ENCODE measurements at regions of chr16 and their contacts with region 1.

Region 1: DNA sequence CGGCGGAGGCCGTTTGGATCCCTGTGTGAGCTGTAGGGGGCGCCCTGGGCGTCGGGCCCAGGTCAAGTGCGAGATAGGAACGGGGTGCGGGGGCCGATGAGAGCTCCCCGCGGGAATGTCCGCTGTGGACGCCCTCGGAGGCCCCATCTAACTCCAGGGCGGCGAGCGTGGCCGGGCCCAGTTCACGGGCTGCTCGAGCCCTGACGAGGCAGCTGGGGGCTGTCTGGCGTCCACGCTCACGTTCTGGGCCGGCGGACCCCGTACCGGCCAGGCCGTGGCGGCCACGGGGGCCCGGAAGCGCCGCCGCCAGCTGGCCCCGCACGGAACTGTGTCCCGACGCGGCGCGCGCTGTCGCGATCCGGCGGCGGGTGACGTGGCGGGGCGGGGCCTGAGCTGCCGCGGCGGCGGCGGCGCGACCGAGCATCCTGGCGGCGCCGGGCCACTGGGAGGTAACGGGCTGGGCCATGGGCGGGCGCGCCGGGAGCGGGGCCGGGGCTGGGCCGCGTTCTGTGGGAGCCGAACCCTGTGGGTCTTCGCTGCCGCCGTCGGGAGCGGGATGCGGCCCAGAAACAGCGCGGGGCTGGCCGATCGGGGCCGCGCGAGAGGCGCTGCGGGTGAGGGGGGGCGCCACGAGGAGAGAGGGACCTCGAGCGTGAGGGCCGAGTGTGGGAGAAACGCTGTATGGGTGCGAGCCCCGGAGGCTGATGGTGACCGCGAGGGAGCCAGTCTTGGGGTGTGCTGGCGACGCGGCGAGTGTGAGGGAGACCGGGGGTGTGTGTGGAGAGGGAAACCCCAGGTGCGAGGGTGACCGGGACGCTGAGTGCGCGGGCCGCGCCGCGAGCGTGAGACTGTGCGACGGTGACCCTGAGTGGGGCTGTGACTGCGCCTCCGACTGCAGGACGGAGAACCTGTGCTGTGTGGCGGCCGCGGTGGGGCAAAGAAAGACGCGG is at the start of gene SLC7A6:
- DNase-seq: peak; percentile 85 to 90
- H3K4me3 ChIP-seq: peak within 1 kb of the TSS; percentile 94
- H3K4me3 Mint-ChIP-seq: peak within 1 kb of the TSS; percentile 91
- H3K27ac Mint-ChIP-seq: peak within 1 kb of the TSS; percentile 98
- H3K4me1 ChIP-seq: peaks cover 44% of the 10 kb centered on the region
- H3K4me1 Mint-ChIP-seq: peaks cover 31% of the 10 kb centered on the region
- H3K27me3 ChIP-seq: no peaks in the 10 kb centered on the region
- H3K27me3 Mint-ChIP-seq: no peaks in the 10 kb centered on the region
- CTCF ChIP-seq: peak; percentile 77 to 79
- total RNA-seq, gene SLC7A6: 236 and 267 TPM in 2 replicates

Region 2: GRCh38 chr16:68116256-68116867 is 148.0 kb before region 1 on chr16:
- CTCF ChIA-PET with region 1: no interaction called
- POLR2A ChIA-PET with region 1: no interaction called
- intact Hi-C with region 1: no loop called
- DNase-seq: peak in 1 of 2 experiments; percentile 29
- H3K4me3 ChIP-seq: no peak overlapping the region
- H3K4me3 Mint-ChIP-seq: no peak overlapping the region
- H3K27ac Mint-ChIP-seq: no peak overlapping the region
- H3K4me1 ChIP-seq: peaks cover 9% of the 10 kb centered on the region; the same call in 1 of the 2 replicates
- H3K4me1 Mint-ChIP-seq: peaks cover 11% of the 10 kb centered on the region
- H3K27me3 ChIP-seq: no peaks in the 10 kb centered on the region
- H3K27me3 Mint-ChIP-seq: no peaks in the 10 kb centered on the region
- CTCF ChIP-seq: peak; percentile 68 to 82

Region 3: DNA sequence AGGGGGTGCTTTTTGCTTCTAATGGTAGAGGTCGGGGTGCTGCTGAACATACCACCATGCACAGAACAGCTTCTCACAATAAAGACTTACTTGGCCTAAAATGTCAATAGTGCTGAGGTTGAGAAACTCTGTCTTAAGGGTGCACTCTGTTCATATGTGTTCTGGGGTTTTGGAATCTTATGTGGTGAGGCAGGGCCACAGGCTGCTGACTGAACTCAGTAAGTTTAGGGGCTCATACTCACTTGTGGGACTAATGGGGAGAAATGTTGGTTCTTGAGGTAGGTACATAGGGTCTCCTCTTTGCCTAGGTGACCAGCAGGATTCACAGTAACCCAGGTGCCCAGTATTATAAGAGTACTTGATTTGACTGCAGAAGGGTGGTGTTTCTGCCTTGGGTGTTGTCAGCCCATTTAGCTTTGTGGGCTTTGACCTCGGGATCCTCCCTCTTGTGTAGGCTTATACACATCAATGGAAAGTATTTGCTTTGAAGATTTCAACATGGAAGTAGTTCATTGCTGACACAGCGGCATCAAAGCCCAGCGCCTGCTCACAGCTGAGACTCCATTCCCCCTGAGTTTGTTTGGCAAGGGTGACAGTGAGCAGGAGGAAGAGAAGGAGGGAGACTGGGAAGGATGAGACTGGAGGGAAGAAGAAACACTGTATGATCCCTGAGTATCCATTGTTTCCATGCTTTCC is 17.1 kb after region 1 on chr16:
- CTCF ChIA-PET with region 1: interaction called, 14 read pairs
- POLR2A ChIA-PET with region 1: interaction called, 15 read pairs
- intact Hi-C with region 1: loop called (anchors 1 kb)
- DNase-seq: peak; percentile 69 to 79
- H3K4me3 ChIP-seq: no peak overlapping the region
- H3K4me3 Mint-ChIP-seq: peak overlapping the region; percentile 29
- H3K27ac Mint-ChIP-seq: peak overlapping the region; percentile 58
- H3K4me1 ChIP-seq: peaks cover 34% of the 10 kb centered on the region
- H3K4me1 Mint-ChIP-seq: peaks cover 42% of the 10 kb centered on the region
- H3K27me3 ChIP-seq: no peaks in the 10 kb centered on the region
- H3K27me3 Mint-ChIP-seq: no peaks in the 10 kb centered on the region
- CTCF ChIP-seq: no peak

Region 4: DNA sequence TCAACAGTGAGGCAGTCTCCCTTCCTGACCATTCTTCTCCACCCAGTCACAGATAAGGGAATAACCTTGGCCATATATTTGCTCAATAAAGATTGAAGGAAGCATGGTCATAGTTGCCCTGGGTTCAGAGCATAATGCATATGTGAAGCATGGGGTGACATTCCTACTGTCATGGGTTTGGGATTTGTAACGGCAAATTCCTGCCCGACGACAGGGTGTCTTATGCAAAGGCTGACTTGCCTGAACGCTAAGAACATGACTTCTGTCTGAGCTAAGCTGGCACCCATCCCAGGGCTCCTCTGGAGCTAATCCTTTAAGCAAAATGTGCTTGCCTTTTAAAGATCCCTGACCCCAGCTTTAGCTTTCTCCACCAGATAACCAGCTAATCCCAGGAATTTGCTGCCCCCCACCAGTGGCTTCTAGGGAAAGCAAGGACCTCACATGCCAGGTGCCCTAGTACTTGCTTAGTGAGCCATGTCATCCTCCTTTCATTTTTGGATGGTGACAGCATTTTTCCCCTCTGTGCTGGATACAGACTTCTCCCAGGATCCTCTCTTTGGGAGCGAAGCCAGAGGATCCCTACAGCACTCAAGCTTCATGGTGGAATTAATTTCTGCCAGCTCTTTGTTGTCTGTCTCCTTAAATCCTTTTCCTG is 34.6 kb after region 1 on chr16:
- CTCF ChIA-PET with region 1: interaction called, 6 read pairs
- POLR2A ChIA-PET with region 1: interaction called, 11 read pairs
- intact Hi-C with region 1: loop called (anchors 5 kb)
- DNase-seq: peak in 1 of 2 experiments; percentile 42
- H3K4me3 ChIP-seq: no peak overlapping the region
- H3K4me3 Mint-ChIP-seq: peak overlapping the region; percentile 46
- H3K27ac Mint-ChIP-seq: peak overlapping the region; percentile 89
- H3K4me1 ChIP-seq: peaks cover 29% of the 10 kb centered on the region
- H3K4me1 Mint-ChIP-seq: peaks cover 55% of the 10 kb centered on the region
- H3K27me3 ChIP-seq: no peaks in the 10 kb centered on the region
- H3K27me3 Mint-ChIP-seq: no peaks in the 10 kb centered on the region
- CTCF ChIP-seq: no peak

Region 5: GRCh38 chr16:68310761-68311511 is 46.5 kb after region 1 on chr16 and contains the starts of genes PRMT7 and SLC7A6OS:
- CTCF ChIA-PET with region 1: interaction called, 20 read pairs
- POLR2A ChIA-PET with region 1: interaction called, 26 read pairs
- intact Hi-C with region 1: loop called (anchors 5 kb)
- DNase-seq: peak; percentile 93 to 95
- H3K4me3 ChIP-seq: peak within 1 kb of the TSS; percentile 65
- H3K4me3 Mint-ChIP-seq: peak within 1 kb of the TSS; percentile 77
- H3K27ac Mint-ChIP-seq: peak within 1 kb of the TSS; percentile 89
- H3K4me1 ChIP-seq: peaks cover 35% of the 10 kb centered on the region
- H3K4me1 Mint-ChIP-seq: peaks cover 39% of the 10 kb centered on the region
- H3K27me3 ChIP-seq: no peaks in the 10 kb centered on the region
- H3K27me3 Mint-ChIP-seq: no peaks in the 10 kb centered on the region
- CTCF ChIP-seq: peak in 1 of 2 experiments; percentile 52
- total RNA-seq, gene PRMT7: 156 and 166 TPM in 2 replicates
- total RNA-seq, gene SLC7A6OS: 34.0 and 34.2 TPM in 2 replicates